Heart left ventricle (tissue), 16 donors: ENCODE measurements at regions of chr9 and their contacts with region 1.

Region 1: GRCh38 chr9:35945341-35946018 is 12.5 kb downstream of the OR2S2 start:
- DNase-seq: peak; percentile 83 to 90 (median 87)
- ATAC-seq: peak; percentile 31 to 83 (median 80)
- H3K4me3 ChIP-seq: peak overlapping the region in 6 of 12 donors; percentile 18 to 36 (median 26)
- H3K27ac ChIP-seq: peak overlapping the region; percentile 23 to 80 (median 64)
- H3K4me1 ChIP-seq: peaks cover 0 to 34% (median 19%) of the 10 kb centered on the region in 12 donors
- H3K27me3 ChIP-seq: no peaks in the 10 kb centered on the region
- CTCF ChIP-seq: peak; percentile 75 to 95 (median 87)
- POLR2A ChIP-seq: no peak

Region 2: DNA sequence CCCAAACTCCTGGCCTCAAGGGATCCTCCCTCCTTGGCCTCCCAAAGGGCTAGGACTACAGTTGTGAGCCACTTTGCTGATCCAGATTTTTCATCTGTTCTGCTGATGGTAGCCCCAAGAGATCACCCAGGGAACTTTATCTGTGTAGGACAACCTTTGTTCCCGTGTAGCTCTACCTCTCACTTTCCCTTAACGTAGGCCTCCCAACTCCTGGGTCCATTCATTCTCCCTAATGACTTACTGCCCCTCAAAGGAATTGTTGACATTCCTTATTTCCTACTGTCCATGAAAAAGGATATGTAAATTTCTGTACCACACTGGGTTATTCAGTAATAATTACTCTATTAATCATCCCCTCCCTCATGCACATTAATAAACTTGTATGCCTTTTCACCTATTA is 1038.4 kb before region 1 on chr9:
- intact Hi-C with region 1: no loop called
- DNase-seq: no peak
- ATAC-seq: no peak
- H3K4me3 ChIP-seq: no peak overlapping the region
- H3K27ac ChIP-seq: no peak overlapping the region
- H3K4me1 ChIP-seq: no peaks in the 10 kb centered on the region
- H3K27me3 ChIP-seq: peaks cover 0 to 13% (median 0%) of the 10 kb centered on the region in 9 donors
- CTCF ChIP-seq: no peak
- POLR2A ChIP-seq: no peak

Region 3: GRCh38 chr9:35903049-35903448 is 42.4 kb before region 1 on chr9:
- intact Hi-C with region 1: loop called (anchors 1 to 5 kb)
- DNase-seq: peak in 2 of 5 donors; percentile 37 to 44
- ATAC-seq: no peak
- H3K4me3 ChIP-seq: no peak overlapping the region
- H3K27ac ChIP-seq: peak overlapping the region in 1 of 12 donors; percentile 95
- H3K4me1 ChIP-seq: peaks cover 16 to 54% (median 48%) of the 10 kb centered on the region in 12 donors
- H3K27me3 ChIP-seq: no peaks in the 10 kb centered on the region
- CTCF ChIP-seq: peak; percentile 62 to 86 (median 78)
- POLR2A ChIP-seq: no peak

Region 4: DNA sequence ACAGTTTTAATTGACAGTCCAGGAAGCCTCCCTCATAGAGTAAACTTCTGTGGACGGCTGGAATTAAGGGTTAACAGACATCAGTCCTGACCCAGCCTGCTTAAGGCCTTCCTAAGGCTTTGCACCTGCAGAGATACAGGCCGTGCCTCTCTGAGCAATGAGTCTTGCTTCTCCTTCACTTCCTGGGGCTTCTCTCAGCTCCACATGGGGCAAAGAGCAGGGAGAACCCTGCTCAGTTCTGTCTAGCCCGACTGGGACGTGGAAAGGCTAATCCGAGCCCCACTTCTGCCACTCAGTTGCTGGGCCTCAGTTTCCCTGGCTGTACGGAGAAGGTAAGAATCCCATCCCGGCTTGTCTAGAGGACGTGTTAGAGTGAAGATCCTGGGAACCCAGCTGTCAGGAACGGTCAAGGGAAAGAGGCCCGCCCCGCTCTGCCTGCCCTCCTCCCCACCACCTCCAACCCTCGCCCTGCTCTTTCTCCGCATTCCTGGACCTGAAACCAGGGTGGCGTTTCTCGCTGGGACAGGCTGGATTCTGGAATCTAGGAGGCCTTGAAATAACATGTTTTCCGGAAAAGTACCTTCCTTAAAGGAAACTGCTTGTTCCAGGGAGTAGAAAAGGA is 29.7 kb before region 1 on chr9:
- intact Hi-C with region 1: no loop called
- DNase-seq: peak in 1 of 5 donors; percentile 61
- ATAC-seq: peak in 3 of 4 donors; percentile 13 to 29 (median 18)
- H3K4me3 ChIP-seq: no peak overlapping the region
- H3K27ac ChIP-seq: peak overlapping the region; percentile 68 to 93 (median 83)
- H3K4me1 ChIP-seq: peaks cover 19 to 90% (median 55%) of the 10 kb centered on the region in 12 donors
- H3K27me3 ChIP-seq: no peaks in the 10 kb centered on the region
- CTCF ChIP-seq: no peak
- POLR2A ChIP-seq: no peak